ENCODE measurements at regions of chr18 and their contacts with region 1.

Region 1: GRCh38 chr18:56702946-56703345 is 51.8 kb downstream of the WDR7 start:
- DNase-seq: no peak
- ATAC-seq: peak; percentile 48
- H3K4me3 ChIP-seq: no peak overlapping the region
- H3K27ac ChIP-seq: no peak overlapping the region
- H3K4me1 ChIP-seq: no peaks in the 10 kb centered on the region
- H3K27me3 ChIP-seq: no peaks in the 10 kb centered on the region
- CTCF ChIP-seq: peak; percentile 28 to 43 (median 43); a peak in 5 of 6 replicates
- EP300 ChIP-seq: no peak
- POLR2A ChIP-seq: no peak
- RAD21 ChIP-seq: peak; percentile 64

Region 2: DNA sequence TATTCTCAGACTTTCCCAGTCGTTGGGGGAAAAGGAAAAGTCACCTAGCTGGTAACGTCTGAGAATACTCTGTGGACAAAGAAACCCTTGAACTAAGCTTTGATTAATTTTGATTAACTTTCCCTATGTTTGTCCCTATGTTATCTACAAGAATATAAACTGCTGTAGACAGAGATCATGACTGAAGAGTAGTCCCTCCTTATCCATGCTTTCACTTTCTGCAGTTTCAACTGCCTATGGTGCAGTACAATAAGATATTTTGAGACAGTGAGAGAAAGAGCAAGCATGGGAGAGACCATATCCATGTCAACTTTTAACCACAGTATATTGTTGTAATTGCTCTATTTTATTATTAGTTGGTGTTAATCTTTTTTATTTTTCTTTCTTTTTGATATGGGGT is 96.3 kb before region 1 on chr18:
- CTCF ChIA-PET with region 1: no interaction called
- POLR2A ChIA-PET with region 1: no interaction called
- RAD21 ChIA-PET with region 1: no interaction called
- SMC1A ChIA-PET with region 1: no interaction called
- in situ Hi-C with region 1: no loop called
- intact Hi-C with region 1: no loop called
- DNase-seq: no peak
- ATAC-seq: no peak
- H3K4me3 ChIP-seq: no peak overlapping the region
- H3K27ac ChIP-seq: no peak overlapping the region
- H3K4me1 ChIP-seq: no peaks in the 10 kb centered on the region
- H3K27me3 ChIP-seq: no peaks in the 10 kb centered on the region
- CTCF ChIP-seq: no peak
- EP300 ChIP-seq: no peak
- POLR2A ChIP-seq: no peak
- RAD21 ChIP-seq: no peak

Region 3: GRCh38 chr18:56645415-56646016 is 57.4 kb before region 1 on chr18:
- CTCF ChIA-PET with region 1: interaction called, 69 read pairs
- POLR2A ChIA-PET with region 1: interaction called, 4 read pairs
- RAD21 ChIA-PET with region 1: no interaction called
- SMC1A ChIA-PET with region 1: interaction called, 30 read pairs
- in situ Hi-C with region 1: no loop called
- intact Hi-C with region 1: no loop called
- DNase-seq: no peak
- ATAC-seq: peak; percentile 49
- H3K4me3 ChIP-seq: no peak overlapping the region
- H3K27ac ChIP-seq: no peak overlapping the region
- H3K4me1 ChIP-seq: no peaks in the 10 kb centered on the region; the same call in none of the 2 replicates
- H3K27me3 ChIP-seq: no peaks in the 10 kb centered on the region
- CTCF ChIP-seq: peak; percentile 40 to 62 (median 60); a peak in 5 of 6 replicates
- EP300 ChIP-seq: no peak
- POLR2A ChIP-seq: no peak
- RAD21 ChIP-seq: peak; percentile 37; the same call in 1 of the 2 replicates

Region 4: DNA sequence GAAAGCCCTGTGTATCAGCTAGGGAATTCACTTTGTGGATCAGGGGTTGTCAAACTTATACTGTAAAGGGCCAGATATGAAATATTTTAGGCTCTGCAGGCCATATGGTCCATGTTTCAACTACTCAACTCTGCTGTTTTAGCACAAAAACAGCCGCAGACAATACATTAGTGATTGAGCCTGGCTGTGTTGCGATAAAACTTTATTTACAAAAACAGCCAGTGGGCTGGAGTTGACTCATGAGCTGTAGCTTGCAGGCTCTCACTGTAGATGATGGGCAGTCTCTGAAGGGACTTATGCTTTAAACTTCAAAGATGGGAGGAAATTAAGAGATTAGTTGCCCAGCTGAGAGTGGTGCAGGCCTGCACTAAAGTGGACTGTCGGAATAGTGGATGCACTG is 18.7 kb before region 1 on chr18:
- CTCF ChIA-PET with region 1: interaction called, 12 read pairs
- POLR2A ChIA-PET with region 1: no interaction called
- RAD21 ChIA-PET with region 1: no interaction called
- SMC1A ChIA-PET with region 1: interaction called, 4 read pairs
- in situ Hi-C with region 1: no loop called
- intact Hi-C with region 1: no loop called
- DNase-seq: no peak
- ATAC-seq: no peak
- H3K4me3 ChIP-seq: no peak overlapping the region
- H3K27ac ChIP-seq: no peak overlapping the region
- H3K4me1 ChIP-seq: no peaks in the 10 kb centered on the region
- H3K27me3 ChIP-seq: no peaks in the 10 kb centered on the region
- CTCF ChIP-seq: no peak
- EP300 ChIP-seq: no peak
- POLR2A ChIP-seq: no peak
- RAD21 ChIP-seq: no peak

Region 5: DNA sequence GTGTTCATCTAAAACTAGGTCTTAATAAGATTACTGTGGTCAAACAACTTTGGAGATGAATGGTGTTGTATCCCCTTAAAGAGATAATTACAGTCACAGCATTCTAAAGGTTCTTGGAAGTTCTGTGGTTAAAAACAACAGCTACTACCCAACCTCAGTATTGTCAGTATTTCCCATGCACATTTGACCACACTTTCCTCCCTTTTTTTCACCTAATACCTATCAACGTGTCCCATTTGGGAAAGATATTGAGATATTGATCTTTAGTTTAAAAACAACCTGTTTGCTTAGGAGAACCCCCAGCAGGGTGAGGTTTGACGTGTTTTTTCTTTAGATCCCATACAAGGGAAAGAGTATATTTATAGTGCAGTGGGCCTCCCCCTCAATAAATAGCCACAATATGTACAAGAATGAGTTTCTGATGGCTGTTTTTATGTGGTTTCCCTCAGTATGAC is 13.8 kb after region 1 on chr18:
- CTCF ChIA-PET with region 1: interaction called, 29 read pairs
- POLR2A ChIA-PET with region 1: no interaction called
- RAD21 ChIA-PET with region 1: interaction called, 18 read pairs
- SMC1A ChIA-PET with region 1: interaction called, 15 read pairs
- in situ Hi-C with region 1: no loop called
- intact Hi-C with region 1: no loop called
- DNase-seq: peak; percentile 12
- ATAC-seq: peak; percentile 83
- H3K4me3 ChIP-seq: no peak overlapping the region
- H3K27ac ChIP-seq: peak overlapping the region; percentile 18; the same call in 1 of the 2 replicates
- H3K4me1 ChIP-seq: peaks cover 3% of the 10 kb centered on the region; the same call in 1 of the 2 replicates
- H3K27me3 ChIP-seq: no peaks in the 10 kb centered on the region
- CTCF ChIP-seq: no peak
- EP300 ChIP-seq: peak; percentile 15 to 56; a peak in 2 of 4 replicates
- POLR2A ChIP-seq: no peak
- RAD21 ChIP-seq: no peak

Region 6: DNA sequence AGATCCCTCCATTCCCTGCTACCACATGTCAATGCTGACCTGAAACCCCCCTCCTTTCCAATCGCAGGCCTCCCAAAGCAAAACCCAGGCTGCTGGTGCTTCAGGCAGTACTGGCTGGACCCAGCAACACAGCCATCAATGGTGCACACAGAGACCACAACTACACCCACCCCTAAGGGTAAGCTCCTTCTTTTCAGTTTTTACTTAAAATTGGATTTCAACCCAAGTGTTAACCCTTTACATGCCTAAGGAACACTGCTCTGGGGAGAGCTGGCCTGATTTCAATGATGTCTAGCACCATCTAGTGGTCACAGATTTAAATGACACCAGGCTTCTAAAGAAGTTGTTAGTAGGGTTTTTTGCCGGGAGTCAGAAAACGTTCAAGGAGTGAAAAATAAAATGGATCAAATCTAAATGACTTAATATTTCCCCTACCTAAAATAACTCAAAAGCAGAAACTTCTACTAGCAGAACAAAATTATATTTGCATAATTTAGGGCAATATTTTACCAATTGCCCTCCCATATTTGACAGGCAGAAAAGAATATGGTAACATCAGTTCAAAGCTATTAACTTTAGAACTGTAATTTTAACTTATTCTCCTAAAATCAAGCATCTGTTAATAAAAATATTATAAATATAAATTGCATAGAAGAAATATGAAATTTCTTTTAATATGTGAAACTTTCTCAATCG is 858.9 kb after region 1 on chr18:
- CTCF ChIA-PET with region 1: interaction called, 17 read pairs
- POLR2A ChIA-PET with region 1: no interaction called
- RAD21 ChIA-PET with region 1: no interaction called
- SMC1A ChIA-PET with region 1: interaction called, 4 read pairs
- in situ Hi-C with region 1: no loop called
- intact Hi-C with region 1: no loop called
- DNase-seq: no peak
- ATAC-seq: peak; percentile 77
- H3K4me3 ChIP-seq: no peak overlapping the region
- H3K27ac ChIP-seq: no peak overlapping the region
- H3K4me1 ChIP-seq: no peaks in the 10 kb centered on the region
- H3K27me3 ChIP-seq: no peaks in the 10 kb centered on the region
- CTCF ChIP-seq: peak; percentile 61 to 73 (median 71)
- EP300 ChIP-seq: no peak
- POLR2A ChIP-seq: no peak
- RAD21 ChIP-seq: peak; percentile 85